Aorta (tissue), 5 donors: ENCODE measurements at regions of chr7 and their contacts with region 1.

Region 1: DNA sequence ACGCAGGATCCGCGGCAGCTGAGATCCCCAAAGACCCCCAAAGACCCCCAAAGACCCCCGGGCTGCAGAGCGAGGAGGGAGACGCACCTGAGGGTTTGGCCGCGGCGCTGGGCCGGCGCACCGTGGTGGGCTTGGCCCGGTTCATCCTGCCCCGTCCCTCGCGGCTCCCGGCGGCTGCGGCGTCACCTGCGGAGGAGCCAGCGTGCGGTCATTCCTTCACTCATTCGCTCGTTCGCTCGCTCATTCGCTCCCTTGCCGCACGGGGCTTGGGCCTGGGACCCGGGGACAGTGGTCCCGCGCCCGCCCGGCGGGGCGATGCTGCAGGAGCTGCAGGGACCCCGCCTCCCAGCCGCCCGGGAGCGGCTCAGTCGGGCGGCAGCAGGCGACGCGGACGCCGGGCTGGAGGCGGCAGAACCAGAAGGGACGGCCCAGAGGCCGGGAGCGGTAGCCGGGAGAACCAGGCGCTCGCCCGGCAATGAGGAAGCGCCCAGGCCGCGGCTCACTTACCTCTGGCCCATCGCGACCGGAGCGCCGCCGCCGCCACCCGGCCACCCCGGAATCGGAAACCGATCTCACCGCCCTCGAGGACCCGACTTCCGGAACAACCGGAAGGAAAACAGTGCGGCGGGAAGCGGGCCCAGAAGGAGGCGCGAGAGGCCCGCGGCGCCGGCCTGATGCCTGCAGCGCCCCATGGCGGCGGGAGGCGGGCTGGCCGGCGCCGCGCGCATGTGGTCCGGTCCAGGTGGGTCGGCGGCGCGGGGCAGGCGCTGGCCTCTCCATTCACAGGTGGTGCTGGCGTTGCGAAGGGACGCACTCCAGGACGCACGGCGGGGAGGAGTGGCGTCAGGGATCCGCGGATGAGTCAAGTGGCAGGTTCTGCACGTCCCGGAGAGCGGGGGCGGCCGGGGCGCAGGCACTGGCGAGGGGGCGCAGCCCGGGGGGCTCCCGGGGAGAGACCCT is at the start of gene INTS1:
- DNase-seq: peak; percentile 95 to 97
- ATAC-seq: peak; percentile 94
- H3K4me3 ChIP-seq: peak within 1 kb of the TSS; percentile 71 to 97
- H3K27ac ChIP-seq: no peak within 1 kb of the TSS
- H3K4me1 ChIP-seq: no peaks in the 10 kb centered on the region
- H3K27me3 ChIP-seq: no peaks in the 10 kb centered on the region
- total RNA-seq, gene INTS1: 56.4 to 77.9 TPM

Region 2: GRCh38 chr7:1537535-1538412 is 33.7 kb after region 1 on chr7:
- intact Hi-C with region 1: loop called (anchors 2 to 5 kb)
- DNase-seq: peak; percentile 94 to 99
- ATAC-seq: peak; percentile 75
- H3K4me3 ChIP-seq: peak overlapping the region; percentile 34 to 36
- H3K27ac ChIP-seq: peak overlapping the region; percentile 88 to 98
- H3K4me1 ChIP-seq: no peaks in the 10 kb centered on the region
- H3K27me3 ChIP-seq: no peaks in the 10 kb centered on the region

Region 3: DNA sequence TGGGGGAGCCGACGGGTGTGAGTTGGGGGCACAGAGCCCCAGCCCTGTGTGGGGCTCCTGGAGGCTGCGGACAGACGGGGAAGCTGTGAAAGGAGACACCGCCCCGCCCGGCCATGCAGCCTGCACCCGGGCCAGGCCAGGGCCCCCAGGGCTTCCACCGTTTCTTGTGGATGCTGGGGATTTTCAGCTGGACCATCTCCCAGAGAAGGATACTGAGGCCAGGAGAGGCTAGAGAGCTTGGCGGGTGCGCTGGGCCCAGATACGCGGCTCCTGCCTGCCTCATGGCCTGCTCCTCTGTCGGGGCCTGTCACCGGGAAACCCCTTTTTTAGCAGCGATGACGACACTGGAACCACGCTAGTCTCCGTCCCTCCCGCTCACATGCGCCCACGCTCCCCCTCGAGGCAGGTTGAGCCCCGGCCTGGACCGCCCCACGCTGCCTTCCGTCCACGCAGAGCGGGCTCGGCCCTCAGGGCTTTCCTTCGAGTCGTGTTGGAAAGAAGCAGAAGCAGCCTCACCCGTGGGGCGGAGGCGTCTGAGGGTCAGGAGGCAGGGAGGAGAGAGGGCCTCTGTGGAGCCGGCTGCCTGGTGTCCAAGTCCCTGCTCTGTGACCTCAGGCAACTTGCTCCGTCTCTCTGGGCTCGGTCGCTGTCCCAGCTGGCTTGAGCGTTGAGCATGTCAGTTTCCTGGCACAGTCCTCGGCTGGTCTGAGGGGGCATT is 40.2 kb after region 1 on chr7:
- intact Hi-C with region 1: loop called (anchors 2 to 5 kb)
- DNase-seq: no peak
- ATAC-seq: no peak
- H3K4me3 ChIP-seq: no peak overlapping the region
- H3K27ac ChIP-seq: no peak overlapping the region
- H3K4me1 ChIP-seq: no peaks in the 10 kb centered on the region
- H3K27me3 ChIP-seq: no peaks in the 10 kb centered on the region

Region 4: DNA sequence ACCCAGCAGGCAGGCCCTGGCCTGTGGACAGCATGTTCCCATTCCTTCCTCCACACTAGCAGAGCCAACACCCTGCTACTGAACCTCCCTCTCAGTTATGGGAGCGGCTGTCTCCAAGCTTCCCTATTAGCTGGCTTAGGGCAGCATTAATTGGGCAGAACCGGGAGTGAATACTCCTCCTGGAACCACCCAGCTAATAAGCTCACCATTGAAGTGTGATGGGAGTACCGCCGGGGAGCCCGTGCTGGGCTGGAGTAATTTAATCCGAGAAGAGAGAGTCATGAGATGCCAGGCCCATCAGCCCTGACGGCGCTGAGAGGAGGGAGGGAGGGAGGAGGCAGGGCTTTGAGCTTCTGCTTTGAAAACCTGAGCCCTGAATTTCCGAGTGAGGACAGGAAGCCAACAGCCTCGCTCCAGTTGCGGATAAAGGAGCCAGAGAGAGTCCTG is 134.1 kb after region 1 on chr7:
- intact Hi-C with region 1: no loop called
- DNase-seq: no peak
- ATAC-seq: no peak
- H3K4me3 ChIP-seq: no peak overlapping the region
- H3K27ac ChIP-seq: no peak overlapping the region
- H3K4me1 ChIP-seq: no peaks in the 10 kb centered on the region
- H3K27me3 ChIP-seq: no peaks in the 10 kb centered on the region